ENCODE measurements at regions of chr2 and their contacts with region 1.

Region 1: GRCh38 chr2:190746971-190747761 is 98.3 kb downstream of the NAB1 start:
- DNase-seq: no peak
- H3K4me3 Mint-ChIP-seq: no peak overlapping the region
- H3K27ac Mint-ChIP-seq: no peak overlapping the region
- H3K4me1 Mint-ChIP-seq: peaks cover 22% of the 10 kb centered on the region
- H3K27me3 Mint-ChIP-seq: no peaks in the 10 kb centered on the region

Region 2: GRCh38 chr2:190679813-190680591 is 67.2 kb before region 1 on chr2:
- CTCF ChIA-PET with region 1: no interaction called
- POLR2A ChIA-PET with region 1: no interaction called
- intact Hi-C with region 1: no loop called
- DNase-seq: peak; percentile 80
- H3K4me3 Mint-ChIP-seq: peak overlapping the region; percentile 61
- H3K27ac Mint-ChIP-seq: peak overlapping the region; percentile 98
- H3K4me1 Mint-ChIP-seq: peaks cover 66% of the 10 kb centered on the region
- H3K27me3 Mint-ChIP-seq: no peaks in the 10 kb centered on the region

Region 3: GRCh38 chr2:190759749-190760213 is 12.6 kb after region 1 on chr2:
- CTCF ChIA-PET with region 1: interaction called, 3 read pairs
- POLR2A ChIA-PET with region 1: no interaction called
- intact Hi-C with region 1: loop called (anchors 2 kb)
- DNase-seq: no peak
- H3K4me3 Mint-ChIP-seq: peak overlapping the region; percentile 51
- H3K27ac Mint-ChIP-seq: peak overlapping the region; percentile 18
- H3K4me1 Mint-ChIP-seq: peaks cover 32% of the 10 kb centered on the region
- H3K27me3 Mint-ChIP-seq: no peaks in the 10 kb centered on the region